Activated T-helper 2 cell treated with anti-CD3 and anti-CD28 coated beads, Interferon-gamma antibody, Interleukin-2, Interleukin-4, amounts not matched to agents 10 μg/mL and 5 μg/mL and 100 μg/mL, durations not matched to agents 14 hours and 24 hours and 36 hours (primary cell): ENCODE measurements at regions of chr22 and their contacts with region 1.

Region 1: DNA sequence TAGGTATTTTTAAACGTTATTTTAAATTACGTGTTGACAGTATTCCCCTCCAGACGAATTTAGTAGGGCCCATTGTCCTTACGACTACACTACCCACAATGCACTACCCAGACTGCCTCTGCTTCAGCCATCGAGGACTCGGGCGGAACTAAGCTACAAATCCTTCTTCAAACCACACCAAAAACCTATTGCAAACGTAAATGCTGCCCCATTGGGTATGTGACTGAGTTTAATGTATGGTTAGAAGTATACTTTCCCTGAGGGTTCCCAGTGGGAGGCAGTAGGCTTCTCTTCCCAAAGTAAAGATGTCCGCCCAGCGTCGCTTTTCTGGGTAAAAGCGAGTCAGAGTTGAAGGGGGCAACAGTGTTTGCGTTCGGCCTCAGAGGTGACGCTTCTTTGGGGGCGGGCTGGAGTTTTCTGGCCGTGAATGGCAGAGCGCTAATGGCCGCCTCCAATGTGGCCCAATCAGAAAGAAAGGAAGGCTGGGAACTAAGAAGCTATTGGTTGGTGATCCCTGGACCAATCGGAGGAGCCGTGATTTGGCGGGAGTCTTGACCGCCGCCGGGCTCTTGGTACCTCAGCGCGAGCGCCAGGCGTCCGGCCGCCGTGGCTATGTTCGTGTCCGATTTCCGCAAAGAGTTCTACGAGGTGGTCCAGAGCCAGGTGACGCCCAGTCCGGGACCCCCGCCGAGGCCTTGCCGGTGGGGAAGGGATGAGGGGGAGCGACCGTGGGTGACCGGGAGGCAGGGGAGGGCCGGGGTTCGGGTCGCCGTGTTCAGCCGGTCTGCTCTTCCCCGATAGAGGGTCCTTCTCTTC is at the start of gene CDC45:
- DNase-seq: peak; percentile 94
- H3K4me3 Mint-ChIP-seq: peak within 1 kb of the TSS; percentile 99
- H3K27ac Mint-ChIP-seq: peak within 1 kb of the TSS; percentile 94
- H3K4me1 Mint-ChIP-seq: peaks cover 35% of the 10 kb centered on the region
- H3K27me3 Mint-ChIP-seq: no peaks in the 10 kb centered on the region
- total RNA-seq, gene CDC45: 101 and 108 TPM in 2 replicates

Region 2: GRCh38 chr22:19143967-19144400 is 335.6 kb before region 1 on chr22:
- intact Hi-C with region 1: loop called (anchors 10 kb)
- DNase-seq: peak; percentile 46
- H3K4me3 Mint-ChIP-seq: peak overlapping the region; percentile 98
- H3K27ac Mint-ChIP-seq: peak overlapping the region; percentile 97
- H3K4me1 Mint-ChIP-seq: peaks cover 7% of the 10 kb centered on the region
- H3K27me3 Mint-ChIP-seq: peaks cover 25% of the 10 kb centered on the region

Region 3: DNA sequence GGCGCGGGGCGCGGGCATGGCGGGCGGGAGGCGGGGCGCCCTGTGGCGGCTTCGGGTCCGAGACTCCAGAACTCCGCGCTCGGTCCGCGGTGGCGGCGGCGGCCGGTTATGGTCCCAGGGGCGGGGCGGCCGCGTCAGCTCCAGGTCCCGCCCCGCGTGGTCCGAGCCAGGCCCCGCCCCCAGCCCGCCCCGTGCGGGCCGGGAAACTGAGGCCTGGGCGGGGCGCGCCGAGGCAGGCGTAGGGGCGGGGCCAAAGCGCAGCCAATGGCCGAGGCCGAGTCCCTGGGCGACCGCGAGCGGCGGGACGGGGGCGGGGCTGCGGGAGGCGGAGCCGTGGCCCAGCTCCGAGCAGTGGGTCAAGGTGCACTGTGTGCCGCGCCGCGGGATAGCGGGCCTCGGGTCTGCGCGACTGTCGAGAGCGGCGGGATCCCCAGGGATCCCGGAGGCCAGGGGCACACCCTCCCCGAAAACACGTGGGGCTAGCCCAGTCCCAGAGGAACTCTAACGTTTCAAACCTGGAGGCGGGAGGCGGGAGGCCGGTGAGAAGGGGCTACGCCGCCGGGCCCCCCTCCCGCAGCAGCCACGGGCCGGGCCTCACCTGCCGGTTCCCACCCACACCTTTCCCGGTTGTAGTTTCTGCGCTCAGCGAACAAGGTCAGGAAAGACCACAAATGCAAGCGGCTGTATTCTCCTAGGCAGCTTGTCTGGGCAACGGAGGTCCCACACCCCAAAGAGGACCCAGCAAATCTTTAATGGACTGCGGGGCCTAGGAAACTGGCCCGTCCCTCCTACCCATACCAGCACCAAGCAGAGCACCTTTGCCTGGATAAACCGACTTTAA is 300.7 kb before region 1 on chr22 and contains the start of gene SLC25A1:
- intact Hi-C with region 1: loop called (anchors 2 kb)
- DNase-seq: peak; percentile 82
- H3K4me3 Mint-ChIP-seq: peak within 1 kb of the TSS; percentile 79
- H3K27ac Mint-ChIP-seq: peak within 1 kb of the TSS; percentile 58
- H3K4me1 Mint-ChIP-seq: peaks cover 18% of the 10 kb centered on the region
- H3K27me3 Mint-ChIP-seq: no peaks in the 10 kb centered on the region
- total RNA-seq, gene SLC25A1: 52.0 and 53.1 TPM in 2 replicates

Region 4: GRCh38 chr22:19432133-19432851 is 47.3 kb before region 1 on chr22 and contains the start of gene MRPL40:
- intact Hi-C with region 1: loop called (anchors 1 kb)
- DNase-seq: peak; percentile 86
- H3K4me3 Mint-ChIP-seq: peak within 1 kb of the TSS; percentile 89
- H3K27ac Mint-ChIP-seq: peak within 1 kb of the TSS; percentile 92
- H3K4me1 Mint-ChIP-seq: peaks cover 35% of the 10 kb centered on the region
- H3K27me3 Mint-ChIP-seq: no peaks in the 10 kb centered on the region
- total RNA-seq, gene MRPL40: 32.2 and 34.8 TPM in 2 replicates

Region 5: DNA sequence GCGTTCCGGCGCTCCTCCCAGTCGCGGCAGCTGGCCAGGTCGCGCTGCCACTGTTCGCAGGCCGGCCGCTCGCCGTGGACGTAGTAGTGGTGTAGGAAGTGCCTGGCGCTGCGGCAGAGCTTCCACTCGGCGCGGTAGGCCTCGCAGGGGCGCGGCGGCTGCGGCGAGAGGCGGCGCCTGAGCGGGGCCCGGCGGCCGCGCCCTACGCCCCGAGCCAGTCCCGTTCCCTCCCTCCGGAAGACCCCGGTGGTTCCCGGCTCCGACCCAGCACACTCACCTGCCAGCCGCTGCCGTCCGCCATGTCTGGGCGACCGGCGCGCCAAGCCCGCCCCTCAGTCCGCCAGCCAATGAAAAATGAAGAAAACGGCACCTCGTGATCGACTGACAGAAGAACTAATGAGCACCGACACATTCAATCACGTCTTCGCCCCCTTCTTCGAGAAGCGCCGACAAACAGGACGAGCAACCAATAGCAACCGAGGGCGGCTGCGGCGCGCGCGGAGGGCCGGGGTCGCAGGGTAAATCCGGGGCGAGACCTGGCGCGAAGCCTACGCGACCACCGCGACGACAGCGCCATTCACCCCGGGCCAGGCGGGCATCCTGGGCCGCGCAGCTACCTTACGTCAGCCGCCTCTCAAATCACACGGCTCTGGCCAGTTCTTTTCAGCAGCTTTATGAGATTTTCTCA is 32.0 kb before region 1 on chr22 and contains the start of gene C22orf39:
- intact Hi-C with region 1: loop called (anchors 1 kb)
- DNase-seq: peak; percentile 90
- H3K4me3 Mint-ChIP-seq: peak within 1 kb of the TSS; percentile 99
- H3K27ac Mint-ChIP-seq: peak within 1 kb of the TSS; percentile 90
- H3K4me1 Mint-ChIP-seq: peaks cover 33% of the 10 kb centered on the region
- H3K27me3 Mint-ChIP-seq: no peaks in the 10 kb centered on the region
- total RNA-seq, gene C22orf39: 26.2 and 26.9 TPM in 2 replicates

Region 6: GRCh38 chr22:19576460-19577421 is 97.2 kb after region 1 on chr22:
- intact Hi-C with region 1: loop called (anchors 5 kb)
- DNase-seq: peak; percentile 63
- H3K4me3 Mint-ChIP-seq: peak overlapping the region; percentile 65
- H3K27ac Mint-ChIP-seq: peak overlapping the region; percentile 94
- H3K4me1 Mint-ChIP-seq: peaks cover 44% of the 10 kb centered on the region
- H3K27me3 Mint-ChIP-seq: no peaks in the 10 kb centered on the region

Region 7: DNA sequence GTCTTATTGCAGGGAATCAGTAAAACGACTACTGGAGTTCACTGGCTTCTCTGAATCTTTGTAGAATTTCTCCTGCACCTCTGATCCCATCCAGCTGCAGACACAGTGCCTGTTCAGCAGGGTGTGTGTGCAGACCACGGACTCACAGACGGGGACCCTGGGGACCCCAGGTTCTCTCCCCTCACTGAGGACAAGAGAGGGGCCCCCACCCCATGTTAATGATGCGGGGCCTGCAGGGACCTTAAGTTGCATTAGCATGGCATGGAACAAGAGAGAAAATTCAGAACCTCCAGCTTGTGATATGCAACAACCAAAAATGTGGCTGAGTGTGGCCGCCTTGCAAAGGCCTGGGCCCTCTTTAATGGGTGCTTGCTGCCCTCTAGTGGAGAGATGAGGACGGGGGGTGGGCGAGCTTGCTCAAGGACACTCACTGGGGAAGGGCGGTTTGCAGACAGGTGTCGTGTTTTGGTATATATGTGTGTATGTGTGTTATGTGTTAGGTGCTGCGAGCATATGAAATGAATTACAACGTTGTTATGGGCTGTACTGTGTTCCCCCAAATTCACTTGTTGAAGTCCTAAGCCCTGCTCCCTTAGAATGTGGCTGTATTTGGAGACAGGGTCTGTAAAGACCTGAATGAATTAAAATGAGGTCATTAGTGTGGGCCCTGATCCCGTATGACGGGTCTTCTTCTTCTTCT is 150.3 kb after region 1 on chr22:
- intact Hi-C with region 1: loop called (anchors 2 kb)
- DNase-seq: peak; percentile 70
- H3K4me3 Mint-ChIP-seq: no peak overlapping the region
- H3K27ac Mint-ChIP-seq: no peak overlapping the region
- H3K4me1 Mint-ChIP-seq: peaks cover 2% of the 10 kb centered on the region
- H3K27me3 Mint-ChIP-seq: peaks cover 5% of the 10 kb centered on the region